Pancreas (tissue), 10 donors: ENCODE measurements at regions of chr16 and their contacts with region 1.

Region 1: DNA sequence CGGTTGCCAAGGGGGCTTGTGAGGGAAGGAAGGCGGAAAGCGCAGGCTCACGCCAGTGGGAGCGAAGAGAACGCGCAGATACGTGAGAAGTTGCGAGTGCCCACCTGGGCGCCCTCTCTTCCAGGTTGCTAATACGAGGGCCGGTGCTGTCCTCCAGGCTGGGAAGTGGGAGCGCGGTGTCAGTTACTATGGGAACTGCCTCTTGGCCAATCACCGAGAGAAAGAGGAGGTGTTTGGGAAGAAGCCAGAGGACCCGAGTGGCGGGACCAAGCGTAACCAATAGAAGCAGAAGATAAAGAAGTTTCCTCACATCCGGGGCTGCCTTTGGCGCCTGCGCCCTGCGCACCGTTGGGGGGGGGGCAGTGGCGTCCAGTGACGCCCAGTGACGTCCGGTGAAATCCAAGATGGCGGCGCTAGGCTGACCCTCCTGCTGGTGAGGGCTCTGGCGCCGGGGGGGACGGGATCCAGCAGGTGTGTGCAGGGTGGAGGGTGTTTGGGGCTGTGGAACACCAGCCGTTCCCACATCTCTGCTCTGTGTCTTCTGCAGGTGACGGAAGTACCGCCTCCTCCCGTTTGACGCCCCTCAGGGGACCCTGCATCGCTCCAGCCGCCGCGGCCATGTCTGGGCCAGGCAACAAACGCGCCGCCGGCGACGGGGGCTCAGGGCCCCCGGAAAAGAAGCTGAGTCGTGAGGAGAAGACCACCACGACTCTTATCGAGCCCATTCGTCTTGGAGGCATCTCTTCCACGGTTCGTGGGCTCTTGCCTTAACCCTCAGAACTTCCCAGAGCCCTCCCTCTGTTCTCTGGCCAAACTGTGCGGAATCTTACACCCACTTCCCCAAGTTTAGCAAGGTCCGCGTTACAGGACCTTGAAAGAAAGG is at the starts of genes CFAP119 and RNF40:
- DNase-seq: peak; percentile 96 to 99 (median 97)
- ATAC-seq: peak; percentile 92 to 98 (median 96)
- H3K4me3 ChIP-seq: peak within 1 kb of the TSS; percentile 67 to 91 (median 84)
- H3K27ac ChIP-seq: peak within 1 kb of the TSS; percentile 75 to 84 (median 78)
- H3K4me1 ChIP-seq: peaks cover 7 to 18% (median 13%) of the 10 kb centered on the region in 3 donors
- H3K27me3 ChIP-seq: no peaks in the 10 kb centered on the region
- CTCF ChIP-seq: no peak
- total RNA-seq, gene CFAP119: 1.7 to 5.7 (median 3.0) TPM
- total RNA-seq, gene RNF40: 37.7 to 66.6 (median 40.6) TPM

Region 2: GRCh38 chr16:30874821-30875717 is 112.9 kb after region 1 on chr16:
- intact Hi-C with region 1: loop called in 1 of 3 experiments (anchors 10 kb)
- DNase-seq: peak; percentile 86 to 96 (median 88)
- ATAC-seq: peak; percentile 98 to 100 (median 98)
- H3K4me3 ChIP-seq: peak overlapping the region; percentile 69 to 88 (median 80)
- H3K27ac ChIP-seq: peak overlapping the region; percentile 82 to 90 (median 86)
- H3K4me1 ChIP-seq: peaks cover 4 to 9% (median 6%) of the 10 kb centered on the region in 3 donors
- H3K27me3 ChIP-seq: no peaks in the 10 kb centered on the region
- CTCF ChIP-seq: no peak